MCF 10A (cell line): ENCODE measurements at regions of chr5 and their contacts with region 1.

Region 1: DNA sequence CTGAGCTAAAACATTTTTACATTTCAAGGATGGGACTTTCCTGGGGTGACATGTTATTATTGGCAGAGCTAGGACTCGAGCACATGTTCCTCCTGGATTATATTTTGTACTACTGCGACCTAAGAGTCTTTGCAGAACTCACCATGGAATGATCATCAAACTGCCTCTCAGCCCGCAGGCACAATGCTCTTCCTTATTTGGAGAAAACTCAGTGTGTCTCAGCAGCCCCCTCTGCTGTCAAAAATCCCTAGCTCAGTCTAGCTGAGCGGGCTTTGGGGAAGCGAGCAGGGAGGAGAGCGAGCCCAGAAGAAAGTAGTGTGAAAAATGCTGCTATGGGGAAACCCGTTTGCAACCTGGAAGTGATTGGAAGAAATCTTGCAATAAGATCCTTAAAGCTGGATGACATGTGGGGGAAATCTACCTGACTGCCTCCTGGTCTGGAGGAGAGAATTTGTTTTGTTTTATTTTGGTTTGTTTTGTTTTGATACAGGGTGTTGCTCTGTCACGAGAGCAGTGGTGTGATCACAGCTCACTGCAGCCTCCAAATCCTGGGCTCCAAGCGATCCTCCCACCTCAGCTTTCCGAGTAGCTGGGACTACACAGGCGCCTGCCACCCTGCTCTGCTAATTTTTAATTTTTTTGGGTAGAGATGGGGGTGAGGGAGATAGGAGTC is 89.9 kb upstream of the CLINT1 start:
- DNase-seq: peak; percentile 98
- H3K4me3 Mint-ChIP-seq: peak overlapping the region; percentile 26
- H3K27ac Mint-ChIP-seq: peak overlapping the region; percentile 32
- H3K4me1 Mint-ChIP-seq: peaks cover 8% of the 10 kb centered on the region
- H3K27me3 Mint-ChIP-seq: no peaks in the 10 kb centered on the region
- CTCF ChIP-seq: peak; percentile 91

Region 2: DNA sequence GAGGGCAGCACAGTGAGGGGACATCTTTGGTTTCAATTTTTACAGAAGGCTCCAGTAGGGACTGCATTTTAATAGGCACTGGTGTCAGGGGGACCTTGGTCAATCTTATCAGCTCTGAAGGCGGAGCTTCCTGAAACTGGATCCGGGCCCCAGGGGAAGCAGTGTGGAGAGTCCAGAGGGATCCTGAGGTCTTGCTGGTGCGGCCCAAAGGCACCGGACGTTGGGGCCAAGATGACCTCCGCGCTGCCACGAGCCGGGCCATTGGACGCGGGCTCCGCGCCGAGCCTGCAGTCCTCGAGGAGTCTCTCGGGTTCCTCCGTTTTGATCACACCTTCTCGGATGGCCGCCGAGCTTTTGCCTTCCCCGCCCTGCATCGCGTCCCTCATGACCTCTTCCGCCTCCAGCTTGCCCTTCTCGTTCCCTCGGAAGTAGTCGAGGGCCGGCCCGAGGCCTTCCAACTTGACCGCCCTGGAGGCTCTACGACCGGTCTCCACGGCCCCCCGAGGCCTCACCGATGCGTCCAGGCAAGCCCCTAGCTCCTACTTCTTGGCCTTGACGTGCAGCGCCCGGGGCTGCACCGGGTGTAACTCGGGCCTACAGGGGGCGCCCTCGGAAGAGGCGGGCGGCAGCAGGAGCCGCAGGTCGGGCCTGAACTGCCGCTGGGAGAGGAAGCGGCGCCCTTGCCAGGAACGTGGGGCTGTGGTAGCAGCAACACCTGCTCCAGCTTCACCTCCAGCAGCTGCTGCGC is 258.8 kb before region 1 on chr5:
- CTCF ChIA-PET with region 1: no interaction called
- POLR2A ChIA-PET with region 1: no interaction called
- intact Hi-C with region 1: no loop called
- DNase-seq: no peak
- H3K4me3 Mint-ChIP-seq: no peak overlapping the region
- H3K27ac Mint-ChIP-seq: no peak overlapping the region
- H3K4me1 Mint-ChIP-seq: no peaks in the 10 kb centered on the region
- H3K27me3 Mint-ChIP-seq: no peaks in the 10 kb centered on the region
- CTCF ChIP-seq: peak; percentile 20

Region 3: DNA sequence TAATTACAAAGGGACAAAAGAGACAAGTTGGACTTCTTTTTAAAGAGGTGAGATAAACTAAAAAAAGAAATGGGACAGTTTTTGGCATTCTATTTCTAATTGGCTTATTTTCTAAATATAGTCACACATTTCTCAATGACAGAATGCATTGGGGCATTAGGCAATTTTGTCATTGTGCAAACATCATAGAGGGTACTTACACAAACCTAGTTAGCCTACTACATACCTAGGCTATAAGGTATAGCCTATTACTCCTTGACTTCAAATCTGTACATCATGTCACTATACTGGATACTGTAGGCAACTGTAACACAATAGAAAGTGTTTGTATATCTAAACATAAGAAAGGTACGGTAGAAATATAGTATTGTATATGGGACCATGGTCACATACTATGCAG is 149.3 kb before region 1 on chr5:
- CTCF ChIA-PET with region 1: interaction called, 11 read pairs
- POLR2A ChIA-PET with region 1: no interaction called
- intact Hi-C with region 1: no loop called
- DNase-seq: peak; percentile 30
- H3K4me3 Mint-ChIP-seq: no peak overlapping the region
- H3K27ac Mint-ChIP-seq: no peak overlapping the region
- H3K4me1 Mint-ChIP-seq: no peaks in the 10 kb centered on the region
- H3K27me3 Mint-ChIP-seq: no peaks in the 10 kb centered on the region
- CTCF ChIP-seq: no peak

Region 4: DNA sequence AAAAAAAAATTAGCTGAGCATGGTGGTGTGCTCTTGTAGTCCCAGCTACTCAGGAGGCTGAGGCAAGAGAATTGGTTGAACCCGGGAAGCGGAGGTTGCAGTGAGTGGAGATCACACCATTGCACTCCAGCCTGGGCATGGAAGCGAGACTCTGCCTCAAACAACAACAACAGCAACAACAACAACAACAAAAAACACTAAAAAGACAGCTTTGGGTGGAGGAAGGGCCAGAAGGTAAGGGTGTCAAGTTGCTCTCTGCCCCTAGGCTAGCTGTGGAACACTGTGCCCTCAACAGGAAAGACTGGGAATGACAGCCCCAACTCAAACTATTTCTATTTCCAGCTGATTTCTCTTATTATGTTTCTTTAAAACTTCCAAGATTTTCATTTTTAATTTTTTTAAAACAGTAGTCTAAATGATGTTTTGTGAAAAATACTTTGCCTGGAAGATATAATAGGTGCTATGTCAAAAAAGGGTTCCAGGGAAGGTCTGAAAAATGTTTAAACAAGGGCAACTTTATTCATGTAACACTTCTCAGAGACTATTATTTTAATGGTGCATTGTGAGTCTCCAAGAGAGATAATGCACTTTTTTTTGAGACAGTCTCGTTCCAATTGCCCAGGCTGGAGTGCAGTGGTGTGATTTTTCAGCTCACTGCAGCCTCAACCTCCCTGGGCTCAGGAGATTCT is 119.8 kb before region 1 on chr5:
- CTCF ChIA-PET with region 1: interaction called, 13 read pairs
- POLR2A ChIA-PET with region 1: interaction called, 3 read pairs
- intact Hi-C with region 1: no loop called
- DNase-seq: peak; percentile 64
- H3K4me3 Mint-ChIP-seq: no peak overlapping the region
- H3K27ac Mint-ChIP-seq: no peak overlapping the region
- H3K4me1 Mint-ChIP-seq: peaks cover 27% of the 10 kb centered on the region
- H3K27me3 Mint-ChIP-seq: no peaks in the 10 kb centered on the region
- CTCF ChIP-seq: peak; percentile 38

Region 5: GRCh38 chr5:157870837-157871834 is 77.7 kb before region 1 on chr5:
- CTCF ChIA-PET with region 1: interaction called, 14 read pairs
- POLR2A ChIA-PET with region 1: interaction called, 3 read pairs
- intact Hi-C with region 1: no loop called
- DNase-seq: peak; percentile 98
- H3K4me3 Mint-ChIP-seq: peak overlapping the region; percentile 65
- H3K27ac Mint-ChIP-seq: peak overlapping the region; percentile 98
- H3K4me1 Mint-ChIP-seq: peaks cover 18% of the 10 kb centered on the region
- H3K27me3 Mint-ChIP-seq: no peaks in the 10 kb centered on the region
- CTCF ChIP-seq: no peak

Region 6: DNA sequence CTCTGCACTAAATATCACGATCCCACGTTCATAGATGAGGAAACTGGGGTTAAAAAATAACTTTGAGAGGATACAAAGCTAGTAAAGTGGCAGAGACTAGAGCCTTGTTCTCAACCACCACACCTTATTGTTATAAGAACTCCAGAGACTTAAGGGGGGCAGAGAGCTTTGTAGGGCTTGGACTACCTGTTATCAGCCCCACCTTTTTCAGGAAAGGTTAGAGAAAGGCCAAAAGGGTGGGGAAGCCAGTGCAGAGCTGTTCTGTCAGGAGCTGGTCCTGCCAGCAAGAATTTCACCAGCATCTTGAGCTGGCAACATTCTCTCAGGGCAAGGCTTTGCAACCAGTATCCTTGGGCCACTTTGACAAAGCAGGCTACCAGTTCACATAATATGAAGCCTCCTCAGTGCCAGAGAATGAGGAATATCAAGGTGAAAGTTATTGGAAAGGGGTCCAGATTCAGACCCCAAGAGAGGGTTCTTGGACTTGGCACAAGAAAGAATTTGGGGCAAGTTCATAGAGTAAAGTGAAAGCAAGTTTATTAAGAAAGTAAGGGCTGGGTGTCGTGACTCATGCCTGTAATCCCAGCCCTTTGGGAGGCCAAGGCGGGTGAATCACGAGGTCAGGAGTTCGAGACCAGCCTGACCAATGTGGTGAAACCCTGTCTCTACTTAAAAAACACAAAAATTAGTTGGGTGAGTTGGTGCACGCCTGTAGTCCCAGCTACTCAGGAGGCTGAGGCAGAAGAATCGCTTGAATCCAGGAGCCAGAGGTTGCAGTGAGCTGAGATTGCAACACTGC is 23.7 kb before region 1 on chr5:
- CTCF ChIA-PET with region 1: interaction called, 27 read pairs
- POLR2A ChIA-PET with region 1: interaction called, 5 read pairs
- intact Hi-C with region 1: no loop called
- DNase-seq: no peak
- H3K4me3 Mint-ChIP-seq: no peak overlapping the region
- H3K27ac Mint-ChIP-seq: no peak overlapping the region
- H3K4me1 Mint-ChIP-seq: peaks cover 9% of the 10 kb centered on the region
- H3K27me3 Mint-ChIP-seq: no peaks in the 10 kb centered on the region
- CTCF ChIP-seq: no peak

Region 7: DNA sequence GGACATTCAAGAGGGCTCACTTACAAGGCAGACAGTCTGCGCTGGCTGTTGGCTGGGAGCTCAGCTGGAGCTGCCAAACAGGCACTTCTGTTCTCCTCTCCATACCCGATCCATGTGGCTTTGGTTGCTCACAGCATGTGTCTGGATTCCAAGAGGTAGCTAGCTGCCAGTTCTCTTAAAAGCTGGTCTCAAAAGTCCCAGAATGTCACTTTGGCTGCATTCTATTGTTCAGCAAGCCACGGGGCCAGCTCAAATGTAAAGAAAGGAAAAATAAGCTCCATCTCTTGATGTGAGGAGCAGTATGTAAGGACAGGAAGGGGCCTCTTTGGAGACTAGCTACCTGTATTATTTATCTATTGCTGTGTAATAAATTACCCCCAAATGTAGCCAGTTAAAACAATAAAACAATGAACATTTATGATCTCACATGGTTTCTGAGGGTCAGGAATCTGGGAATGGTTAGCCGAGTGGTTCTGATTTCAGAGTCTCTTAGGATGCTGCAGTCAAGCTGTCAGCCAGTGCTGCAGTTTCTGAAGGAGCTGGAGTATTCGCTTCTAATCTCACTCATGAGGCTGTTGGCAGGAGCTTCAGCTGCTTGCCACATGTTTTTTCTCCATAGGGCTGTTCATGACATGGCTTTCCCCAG is 22.8 kb after region 1 on chr5:
- CTCF ChIA-PET with region 1: interaction called, 15 read pairs
- POLR2A ChIA-PET with region 1: interaction called, 5 read pairs
- intact Hi-C with region 1: no loop called
- DNase-seq: no peak
- H3K4me3 Mint-ChIP-seq: no peak overlapping the region
- H3K27ac Mint-ChIP-seq: no peak overlapping the region
- H3K4me1 Mint-ChIP-seq: no peaks in the 10 kb centered on the region
- H3K27me3 Mint-ChIP-seq: peaks cover 9% of the 10 kb centered on the region
- CTCF ChIP-seq: no peak